Right ventricle myocardium inferior (tissue), 1 donor: ENCODE measurements at regions of chr4 and their contacts with region 1.

Region 1: DNA sequence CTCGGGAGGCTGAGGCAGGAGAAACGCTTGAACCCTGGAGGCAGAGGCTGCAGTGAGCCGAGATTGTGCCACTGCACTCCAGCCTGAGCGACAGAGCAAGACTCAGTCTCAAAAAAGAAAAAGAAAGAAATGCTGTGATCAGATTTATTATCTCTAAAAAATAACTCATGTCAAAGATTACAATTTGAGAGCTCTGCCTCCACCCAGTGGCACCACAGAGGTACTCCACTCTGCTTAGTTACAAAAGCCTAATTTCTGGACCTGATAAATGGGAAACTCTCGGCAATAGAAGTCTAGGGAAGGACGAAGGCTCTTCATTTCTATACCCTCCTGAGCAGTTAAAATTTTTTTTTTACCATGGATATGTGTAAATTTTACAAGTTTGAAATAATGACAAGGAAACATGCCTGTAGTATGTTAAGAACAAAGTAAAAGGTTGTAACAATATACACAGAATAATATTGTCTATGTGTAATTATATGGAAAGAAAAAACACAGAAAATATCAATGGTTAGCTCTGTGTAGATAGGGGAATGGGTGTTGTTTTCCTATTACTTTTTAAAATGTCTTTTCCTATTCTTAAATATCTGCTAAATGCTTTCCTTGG is 149.8 kb downstream of the STIM2 start:
- DNase-seq: peak; percentile 49
- ATAC-seq: peak; percentile 57

Region 2: DNA sequence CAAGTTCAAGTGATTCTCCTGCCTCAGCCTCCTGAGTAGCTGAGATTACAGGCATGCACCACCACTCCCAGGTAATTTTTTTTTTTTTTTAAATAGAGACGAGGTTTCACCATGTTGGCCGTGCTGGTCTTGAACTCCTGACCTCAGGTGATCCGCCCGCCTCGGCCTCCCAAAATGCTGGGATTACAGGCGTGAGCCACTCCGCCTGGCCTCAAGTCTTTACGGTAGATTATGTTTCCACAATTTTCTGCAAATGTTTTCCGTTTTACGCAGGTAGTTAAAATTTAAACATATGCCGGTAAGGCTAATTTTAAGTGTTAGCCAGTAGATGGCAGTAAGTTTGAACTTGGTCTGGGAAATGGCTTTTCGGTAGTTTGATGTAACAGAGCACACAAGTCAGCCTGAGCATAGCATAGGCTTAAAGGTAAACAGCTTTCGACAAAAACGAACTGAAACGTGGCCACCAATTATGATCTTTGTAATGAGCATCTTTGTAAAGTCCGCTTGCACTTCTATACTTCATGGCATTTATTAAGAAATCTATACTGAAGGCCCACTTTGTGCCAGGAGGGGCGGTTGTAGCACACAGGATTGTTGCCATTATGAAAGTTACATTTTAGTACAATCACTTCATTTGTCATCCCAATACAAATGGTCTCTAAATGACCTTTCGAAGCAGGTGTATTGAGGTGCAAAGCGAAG is 551.2 kb before region 1 on chr4:
- intact Hi-C with region 1: loop called (anchors 1 kb)
- DNase-seq: no peak
- ATAC-seq: no peak

Region 3: GRCh38 chr4:26583865-26584652 is 426.4 kb before region 1 on chr4 and contains the start of gene TBC1D19:
- intact Hi-C with region 1: loop called (anchors 10 kb)
- DNase-seq: peak; percentile 93
- ATAC-seq: peak; percentile 100
- total RNA-seq, gene TBC1D19: 8.8 TPM

Region 4: DNA sequence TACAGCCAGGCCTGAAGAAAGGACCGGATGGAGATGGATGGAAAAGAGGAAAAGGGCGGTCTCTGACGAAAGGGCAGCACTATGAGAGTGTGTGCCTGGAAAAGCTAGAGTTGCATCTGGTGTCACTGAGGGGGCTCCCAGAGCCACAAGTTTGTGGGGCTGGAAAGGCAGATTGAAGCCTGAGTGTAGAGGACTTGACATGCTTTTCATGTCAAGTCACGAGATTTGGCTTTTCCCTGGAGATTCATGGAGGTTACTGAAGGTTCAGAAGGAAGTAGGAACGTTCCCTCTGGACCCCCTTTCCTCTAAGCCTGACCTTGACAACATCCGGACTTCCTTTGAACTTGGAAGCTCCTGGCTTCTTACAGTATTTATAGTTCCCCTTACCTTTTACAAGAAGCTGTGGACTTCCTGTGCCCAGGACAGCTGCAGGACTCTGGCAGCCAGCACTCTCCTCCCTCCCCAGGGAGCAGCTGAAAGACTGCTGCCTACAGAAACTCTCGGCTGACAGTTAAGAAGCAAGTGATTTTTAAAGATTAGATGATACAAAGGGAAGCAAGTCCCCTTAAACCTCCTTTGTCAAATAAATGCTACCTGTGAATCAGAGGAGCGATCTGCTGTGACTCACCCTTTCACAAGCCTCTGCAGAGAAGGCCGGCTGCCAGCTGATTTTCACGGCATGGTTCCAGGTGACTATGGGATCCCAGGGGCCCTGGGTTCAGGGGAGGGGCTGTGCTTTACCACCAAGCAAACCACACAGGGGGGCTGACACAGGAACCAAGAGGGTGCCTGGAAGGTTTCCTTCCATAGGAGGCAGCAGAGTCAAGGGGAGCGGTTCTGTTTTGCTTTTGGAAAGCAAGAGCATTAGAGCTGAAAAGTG is 222.7 kb before region 1 on chr4:
- intact Hi-C with region 1: loop called (anchors 5 kb)
- DNase-seq: no peak
- ATAC-seq: peak; percentile 56

Region 5: GRCh38 chr4:26942871-26943270 is 67.6 kb before region 1 on chr4:
- intact Hi-C with region 1: no loop called
- DNase-seq: no peak
- ATAC-seq: no peak